Prostate gland (tissue), 2 donors: ENCODE measurements at regions of chr17 and their contacts with region 1.

Region 1: DNA sequence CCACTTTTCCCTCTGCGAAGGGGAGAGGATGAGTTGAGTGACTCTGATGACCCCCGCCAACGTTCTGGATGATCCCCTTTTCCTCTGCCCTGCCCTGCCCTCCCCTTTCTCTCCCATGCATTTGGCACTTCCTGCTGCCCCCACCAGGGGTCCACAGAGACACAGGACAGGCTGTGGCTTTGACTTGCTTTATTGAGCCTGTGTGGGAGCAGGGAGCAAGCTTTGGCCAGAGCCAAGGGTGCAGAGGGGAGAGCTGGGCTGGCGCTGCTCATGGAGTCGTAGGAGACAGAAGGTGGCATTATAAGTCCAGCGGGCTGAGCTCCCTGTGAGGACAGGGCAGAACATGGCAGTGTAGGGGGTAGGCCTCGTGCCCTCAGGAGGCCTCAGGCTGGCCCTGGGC is 1.6 kb downstream of the PPY start:
- DNase-seq: no peak
- H3K4me3 ChIP-seq: no peak overlapping the region
- H3K27ac ChIP-seq: no peak overlapping the region
- H3K4me1 ChIP-seq: no peaks in the 10 kb centered on the region
- H3K27me3 ChIP-seq: no peaks in the 10 kb centered on the region
- CTCF ChIP-seq: no peak
- POLR2A ChIP-seq: no peak

Region 2: DNA sequence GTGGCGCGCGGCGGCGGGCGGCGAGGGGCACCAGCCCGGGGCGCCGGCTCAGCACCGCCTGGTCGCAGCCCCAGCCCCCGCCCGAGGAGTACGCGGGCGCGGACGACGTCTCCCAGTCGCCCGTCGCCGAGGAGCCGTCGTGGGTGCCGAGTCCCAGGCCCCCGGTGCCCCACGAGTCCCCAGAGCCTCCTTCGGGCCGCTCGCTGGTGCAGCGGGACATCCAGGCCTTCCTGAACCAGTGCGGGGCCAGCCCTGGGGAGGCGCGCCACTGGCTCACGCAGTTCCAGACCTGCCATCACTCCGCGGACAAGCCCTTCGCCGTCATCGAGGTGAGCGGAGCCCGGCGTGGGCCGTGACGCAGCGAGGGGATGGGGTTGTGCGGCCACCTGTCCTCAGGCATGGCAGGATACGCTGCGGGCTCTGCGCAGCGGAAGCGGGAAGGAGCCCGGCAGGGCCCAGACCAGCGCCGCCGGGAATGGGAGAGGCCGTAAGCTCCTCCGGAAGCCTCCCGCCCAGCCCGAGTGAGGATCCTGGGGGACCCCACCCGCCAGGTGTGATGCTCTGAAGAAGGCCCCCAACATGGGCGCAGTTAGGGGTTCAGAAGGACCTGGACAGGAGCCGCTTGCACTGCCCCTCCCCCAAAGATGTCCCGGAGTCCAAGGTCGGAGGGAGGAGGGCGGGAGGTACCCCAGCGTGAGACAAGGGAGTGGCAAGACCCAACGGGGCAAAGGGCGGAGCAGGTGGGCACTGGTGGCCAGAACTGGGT is 64.3 kb after region 1 on chr17:
- intact Hi-C with region 1: loop called (anchors 5 kb)
- DNase-seq: no peak
- H3K4me3 ChIP-seq: peak overlapping the region; percentile 35 to 56
- H3K27ac ChIP-seq: no peak overlapping the region
- H3K4me1 ChIP-seq: peaks cover 17% of the 10 kb centered on the region
- H3K27me3 ChIP-seq: peaks cover 3% of the 10 kb centered on the region
- CTCF ChIP-seq: no peak
- POLR2A ChIP-seq: no peak

Region 3: DNA sequence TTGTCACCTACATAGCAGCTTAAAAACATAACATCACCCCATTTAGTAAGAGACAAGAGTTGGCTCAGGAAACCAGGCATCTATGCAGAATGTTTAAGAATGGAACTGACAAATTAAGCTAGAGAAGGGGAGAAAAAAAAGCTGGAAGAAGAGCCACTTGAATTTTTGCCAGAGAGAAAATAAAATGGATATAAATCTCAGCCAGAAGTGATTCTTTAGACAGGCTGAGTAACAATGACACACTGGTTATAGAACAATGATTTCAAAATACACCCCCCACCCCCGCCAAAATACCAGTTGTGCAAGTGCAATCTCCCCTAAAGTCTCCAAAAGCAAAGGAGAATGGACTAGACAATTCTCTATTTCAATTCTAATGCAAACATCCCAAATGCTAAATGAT is 103.4 kb after region 1 on chr17:
- intact Hi-C with region 1: loop called (anchors 5 kb)
- DNase-seq: no peak
- H3K4me3 ChIP-seq: no peak overlapping the region
- H3K27ac ChIP-seq: peak overlapping the region; percentile 63 to 75
- H3K4me1 ChIP-seq: peaks cover 7% of the 10 kb centered on the region
- H3K27me3 ChIP-seq: no peaks in the 10 kb centered on the region
- CTCF ChIP-seq: no peak
- POLR2A ChIP-seq: no peak

Region 4: DNA sequence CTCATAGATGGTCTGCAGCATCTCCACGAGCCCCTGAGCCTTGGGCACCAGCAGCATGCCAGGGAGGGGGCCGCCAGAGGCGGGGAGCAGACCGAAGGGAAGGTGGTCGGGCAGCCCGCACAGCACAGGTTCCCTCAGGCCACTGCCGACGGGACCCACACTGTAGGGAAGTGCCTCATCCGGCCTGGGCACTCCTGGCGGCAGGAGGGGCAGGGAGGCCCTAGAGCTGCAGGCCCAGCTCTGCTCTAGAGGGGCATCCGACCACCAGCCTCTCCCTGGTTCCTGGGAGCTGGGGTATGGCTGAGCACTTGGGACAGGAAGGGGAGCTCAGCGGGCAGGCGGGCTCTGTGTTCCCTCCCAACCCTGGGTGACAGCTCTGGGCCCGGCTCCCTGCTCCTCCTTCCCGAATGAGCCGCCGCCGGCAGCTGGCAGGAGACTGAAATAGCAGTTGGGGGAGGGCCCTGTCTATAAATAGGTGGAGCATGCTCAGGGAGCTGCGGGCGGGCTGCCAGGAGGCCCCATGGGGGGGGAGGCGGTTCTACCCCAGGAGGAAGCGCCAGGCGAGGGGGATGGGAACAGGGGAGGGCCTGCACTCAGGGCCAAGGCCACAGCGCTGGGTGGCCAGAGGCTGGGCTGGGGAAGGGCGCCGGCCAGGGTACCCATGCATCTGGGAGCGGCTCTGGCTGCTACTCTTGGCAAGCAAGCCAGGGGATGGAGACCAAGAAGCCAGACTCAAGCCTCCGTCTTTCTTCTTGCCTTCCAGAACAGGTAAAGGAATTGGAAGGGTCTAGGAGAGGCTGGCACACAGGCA is 170.4 kb after region 1 on chr17:
- intact Hi-C with region 1: loop called (anchors 10 kb)
- DNase-seq: peak; percentile 94
- H3K4me3 ChIP-seq: peak overlapping the region; percentile 8 to 13
- H3K27ac ChIP-seq: peak overlapping the region; percentile 80 to 83
- H3K4me1 ChIP-seq: peaks cover 27% of the 10 kb centered on the region
- H3K27me3 ChIP-seq: no peaks in the 10 kb centered on the region
- CTCF ChIP-seq: peak in 2 of 4 experiments; percentile 23 to 27
- POLR2A ChIP-seq: peak; percentile 74

Region 5: DNA sequence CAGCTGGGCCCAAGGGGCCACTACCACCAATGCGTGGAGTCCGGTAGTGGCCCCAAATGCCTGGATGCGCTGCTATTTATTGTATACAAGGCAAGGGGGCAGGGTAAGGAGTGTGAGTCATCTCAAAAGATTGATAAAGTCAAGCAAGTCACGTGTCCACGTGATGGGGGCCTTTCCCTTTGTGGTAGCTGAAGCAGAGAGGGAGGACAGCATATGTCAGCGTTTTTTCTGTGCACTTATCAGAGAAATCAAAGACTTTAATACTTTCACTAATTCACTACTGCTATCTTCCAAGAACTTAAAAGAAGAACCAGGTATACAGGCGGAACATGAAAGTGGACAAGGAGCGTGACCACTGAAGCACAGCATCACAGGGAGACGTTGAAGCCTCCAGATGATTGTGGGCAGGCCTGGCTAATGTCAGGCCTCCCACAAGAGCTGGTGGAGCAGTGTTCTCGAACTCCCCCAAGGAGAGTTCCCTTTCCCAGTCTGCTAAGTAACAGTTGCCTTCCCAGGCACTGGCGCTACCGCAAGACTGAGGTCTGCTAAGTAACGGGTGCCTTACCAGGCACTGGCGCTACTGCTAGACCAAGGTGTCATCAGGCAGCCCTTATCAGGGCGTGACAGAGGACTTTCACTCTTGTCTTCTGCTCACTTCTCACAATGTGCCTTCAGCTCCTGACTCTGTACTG is 219.0 kb after region 1 on chr17:
- intact Hi-C with region 1: loop called (anchors 10 kb)
- DNase-seq: no peak
- H3K4me3 ChIP-seq: no peak overlapping the region
- H3K27ac ChIP-seq: no peak overlapping the region
- H3K4me1 ChIP-seq: no peaks in the 10 kb centered on the region
- H3K27me3 ChIP-seq: no peaks in the 10 kb centered on the region
- CTCF ChIP-seq: no peak
- POLR2A ChIP-seq: no peak